Mammary epithelial cell (primary cell): ENCODE measurements at regions of chr1 and their contacts with region 1.

Region 1: DNA sequence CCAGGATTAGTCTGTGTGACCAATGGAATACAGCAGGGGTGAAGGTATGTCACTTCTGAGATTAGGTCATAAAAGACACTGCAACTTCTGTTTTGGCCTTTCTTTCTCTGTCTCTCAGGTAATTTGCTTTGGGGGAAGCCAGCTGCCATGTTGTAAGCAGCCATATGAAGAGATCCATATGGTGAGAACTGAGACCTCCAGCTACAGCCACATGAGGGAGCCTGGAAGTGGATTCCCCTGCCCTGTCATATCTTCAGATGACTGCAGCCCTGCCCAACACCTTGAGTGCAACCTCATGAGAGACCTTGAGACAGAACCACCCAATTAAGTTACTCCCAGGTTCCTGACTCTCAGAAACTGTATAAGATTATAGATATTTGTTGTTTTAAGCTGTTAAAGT is 70.1 kb upstream of the ESRRG start:
- DNase-seq: no peak
- H3K4me3 ChIP-seq: no peak overlapping the region
- H3K27ac ChIP-seq: no peak overlapping the region
- H3K4me1 ChIP-seq: peaks cover 5% of the 10 kb centered on the region
- H3K27me3 ChIP-seq: no peaks in the 10 kb centered on the region
- CTCF ChIP-seq: peak in 1 of 2 donors; percentile 15

Region 2: DNA sequence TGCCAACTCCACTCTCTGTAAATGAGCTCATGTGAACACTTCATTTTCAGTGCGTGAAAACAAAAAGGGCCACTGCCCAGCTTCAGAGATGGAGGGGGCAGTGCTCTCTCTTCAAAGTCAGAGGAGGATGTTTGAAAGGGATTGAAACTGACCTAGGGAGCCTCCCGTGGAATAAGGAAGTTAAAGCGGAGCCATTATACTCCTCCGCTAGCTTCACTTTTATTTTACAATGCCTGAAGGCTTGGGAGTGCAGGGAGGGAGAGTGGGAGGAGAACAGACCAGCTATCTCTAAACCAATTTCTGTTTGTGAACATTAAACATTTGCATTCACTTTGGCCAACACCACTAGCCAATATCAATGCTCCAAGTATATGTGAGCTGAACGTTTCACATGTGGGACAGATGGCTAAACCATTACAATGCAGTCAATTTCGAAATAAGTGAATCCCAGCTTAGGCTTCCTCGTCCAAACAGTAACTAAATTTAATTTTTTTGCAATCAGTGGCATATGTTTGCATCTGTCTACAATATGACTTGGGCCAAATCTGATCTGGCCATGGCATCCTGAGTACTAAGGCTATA is 196.9 kb before region 1 on chr1:
- CTCF ChIA-PET with region 1: no interaction called
- dilution Hi-C with region 1: no loop called
- in situ Hi-C with region 1: no loop called
- intact Hi-C with region 1: no loop called
- DNase-seq: no peak
- H3K4me3 ChIP-seq: no peak overlapping the region
- H3K27ac ChIP-seq: no peak overlapping the region
- H3K4me1 ChIP-seq: peaks cover 6% of the 10 kb centered on the region
- H3K27me3 ChIP-seq: no peaks in the 10 kb centered on the region
- CTCF ChIP-seq: no peak

Region 3: GRCh38 chr1:216843409-216843808 is 50.1 kb after region 1 on chr1:
- CTCF ChIA-PET with region 1: no interaction called
- dilution Hi-C with region 1: loop called (anchors 5 kb)
- in situ Hi-C with region 1: no loop called
- intact Hi-C with region 1: no loop called
- DNase-seq: no peak
- H3K4me3 ChIP-seq: no peak overlapping the region
- H3K27ac ChIP-seq: no peak overlapping the region
- H3K4me1 ChIP-seq: no peaks in the 10 kb centered on the region
- H3K27me3 ChIP-seq: no peaks in the 10 kb centered on the region
- CTCF ChIP-seq: no peak